Panc1 (cell line): ENCODE measurements at regions of chr7 and their contacts with region 1.

Region 1: GRCh38 chr7:96075510-96076349 is 246.2 kb downstream of the SLC25A13 start:
- DNase-seq: no peak
- ATAC-seq: peak; percentile 98
- H3K4me3 ChIP-seq: peak overlapping the region; percentile 47 to 65
- H3K27ac ChIP-seq: no peak overlapping the region
- H3K4me1 ChIP-seq: no peaks in the 10 kb centered on the region
- H3K27me3 ChIP-seq: peaks cover 12% of the 10 kb centered on the region; the same call in 1 of the 2 replicates
- CTCF ChIP-seq: peak; percentile 92

Region 2: GRCh38 chr7:96169439-96169838 is 93.7 kb after region 1 on chr7:
- CTCF ChIA-PET with region 1: no interaction called
- POLR2A ChIA-PET with region 1: no interaction called
- in situ Hi-C with region 1: no loop called
- intact Hi-C with region 1: no loop called
- DNase-seq: no peak
- ATAC-seq: no peak
- H3K4me3 ChIP-seq: no peak overlapping the region
- H3K27ac ChIP-seq: no peak overlapping the region
- H3K4me1 ChIP-seq: no peaks in the 10 kb centered on the region
- H3K27me3 ChIP-seq: no peaks in the 10 kb centered on the region
- CTCF ChIP-seq: no peak

Region 3: DNA sequence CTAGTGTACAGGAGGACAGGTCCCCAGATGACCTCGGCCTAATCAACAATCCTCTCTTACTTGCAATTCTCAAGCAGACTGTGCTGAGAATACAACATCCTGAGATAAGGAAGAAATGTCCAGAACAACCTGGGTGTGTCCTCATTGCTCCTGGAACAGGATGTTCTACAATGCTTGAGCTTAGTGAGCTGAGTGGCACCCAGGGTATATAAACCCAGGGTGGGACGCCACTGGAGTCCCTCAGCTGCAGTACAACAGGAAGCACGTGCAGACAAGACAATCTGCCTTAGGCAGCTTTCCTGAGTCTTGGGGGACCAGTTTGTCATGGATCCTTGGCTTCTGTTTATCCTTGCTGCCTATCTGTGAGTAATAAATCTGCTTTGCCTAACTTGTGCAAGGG is 273.8 kb after region 1 on chr7:
- CTCF ChIA-PET with region 1: no interaction called
- POLR2A ChIA-PET with region 1: no interaction called
- in situ Hi-C with region 1: no loop called
- intact Hi-C with region 1: no loop called
- DNase-seq: no peak
- ATAC-seq: no peak
- H3K4me3 ChIP-seq: no peak overlapping the region
- H3K27ac ChIP-seq: no peak overlapping the region
- H3K4me1 ChIP-seq: no peaks in the 10 kb centered on the region
- H3K27me3 ChIP-seq: peaks cover 5% of the 10 kb centered on the region; the same call in 1 of the 2 replicates
- CTCF ChIP-seq: no peak

Region 4: GRCh38 chr7:96414931-96415292 is 339.2 kb after region 1 on chr7:
- CTCF ChIA-PET with region 1: no interaction called
- POLR2A ChIA-PET with region 1: no interaction called
- in situ Hi-C with region 1: no loop called
- intact Hi-C with region 1: loop called (anchors 10 kb)
- DNase-seq: peak; percentile 62
- ATAC-seq: no peak; the same call in 1 of the 2 replicates
- H3K4me3 ChIP-seq: no peak overlapping the region
- H3K27ac ChIP-seq: no peak overlapping the region
- H3K4me1 ChIP-seq: no peaks in the 10 kb centered on the region
- H3K27me3 ChIP-seq: peaks cover 3% of the 10 kb centered on the region; the same call in 1 of the 2 replicates
- CTCF ChIP-seq: peak; percentile 88

Region 5: DNA sequence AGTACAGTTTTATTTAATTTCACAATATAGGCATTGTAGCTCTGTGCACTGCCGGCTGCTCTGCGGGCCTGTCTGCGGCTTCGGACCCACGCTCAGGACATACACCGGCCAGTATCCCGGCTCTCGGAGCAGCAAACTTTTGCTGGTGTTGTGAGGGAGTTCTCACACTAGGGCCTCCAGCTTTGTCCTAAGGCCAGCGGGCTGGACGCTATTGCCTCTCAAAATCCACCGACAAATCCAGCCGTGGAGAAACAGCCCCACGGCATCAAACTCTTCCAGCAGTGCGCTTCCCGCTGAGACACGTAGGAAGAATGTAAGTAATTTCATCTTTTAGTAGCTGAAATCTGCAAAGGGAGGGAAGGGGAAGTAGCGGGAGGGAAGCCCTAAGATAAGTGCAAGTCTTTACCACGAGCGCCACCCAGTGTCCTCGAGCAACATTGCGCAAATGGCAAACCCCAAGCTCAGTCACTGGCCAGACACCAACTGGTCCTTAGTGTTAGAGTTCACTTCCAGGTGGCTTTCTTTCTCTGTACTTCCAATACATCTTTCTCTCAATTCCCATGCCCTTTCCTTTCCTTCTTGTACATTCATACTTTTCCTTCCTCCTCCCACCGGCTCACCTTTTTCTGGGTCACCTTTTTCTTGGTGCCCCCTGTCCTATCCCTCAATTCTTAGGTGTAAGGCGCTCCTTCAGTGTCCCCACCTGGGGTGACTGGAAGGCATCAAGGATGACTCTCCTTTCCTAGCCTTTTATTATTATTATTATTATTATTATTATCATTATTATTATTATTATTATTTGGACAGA is 951.9 kb after region 1 on chr7:
- CTCF ChIA-PET with region 1: no interaction called
- POLR2A ChIA-PET with region 1: no interaction called
- in situ Hi-C with region 1: no loop called
- intact Hi-C with region 1: loop called (anchors 2 kb)
- DNase-seq: peak; percentile 67
- ATAC-seq: peak; percentile 93
- H3K4me3 ChIP-seq: peak overlapping the region; percentile 13 to 43; a peak in 3 of 4 replicates
- H3K27ac ChIP-seq: no peak overlapping the region
- H3K4me1 ChIP-seq: no peaks in the 10 kb centered on the region
- H3K27me3 ChIP-seq: no peaks in the 10 kb centered on the region; the same call in none of the 2 replicates
- CTCF ChIP-seq: peak; percentile 88

Region 6: GRCh38 chr7:97064967-97065587 is 989.3 kb after region 1 on chr7:
- CTCF ChIA-PET with region 1: no interaction called
- POLR2A ChIA-PET with region 1: no interaction called
- in situ Hi-C with region 1: no loop called
- intact Hi-C with region 1: loop called (anchors 2 kb)
- DNase-seq: peak; percentile 38
- ATAC-seq: peak; percentile 96
- H3K4me3 ChIP-seq: no peak overlapping the region
- H3K27ac ChIP-seq: no peak overlapping the region
- H3K4me1 ChIP-seq: no peaks in the 10 kb centered on the region
- H3K27me3 ChIP-seq: no peaks in the 10 kb centered on the region
- CTCF ChIP-seq: peak; percentile 81